ENCODE measurements at regions of chr1 and their contacts with region 1.

Region 1: DNA sequence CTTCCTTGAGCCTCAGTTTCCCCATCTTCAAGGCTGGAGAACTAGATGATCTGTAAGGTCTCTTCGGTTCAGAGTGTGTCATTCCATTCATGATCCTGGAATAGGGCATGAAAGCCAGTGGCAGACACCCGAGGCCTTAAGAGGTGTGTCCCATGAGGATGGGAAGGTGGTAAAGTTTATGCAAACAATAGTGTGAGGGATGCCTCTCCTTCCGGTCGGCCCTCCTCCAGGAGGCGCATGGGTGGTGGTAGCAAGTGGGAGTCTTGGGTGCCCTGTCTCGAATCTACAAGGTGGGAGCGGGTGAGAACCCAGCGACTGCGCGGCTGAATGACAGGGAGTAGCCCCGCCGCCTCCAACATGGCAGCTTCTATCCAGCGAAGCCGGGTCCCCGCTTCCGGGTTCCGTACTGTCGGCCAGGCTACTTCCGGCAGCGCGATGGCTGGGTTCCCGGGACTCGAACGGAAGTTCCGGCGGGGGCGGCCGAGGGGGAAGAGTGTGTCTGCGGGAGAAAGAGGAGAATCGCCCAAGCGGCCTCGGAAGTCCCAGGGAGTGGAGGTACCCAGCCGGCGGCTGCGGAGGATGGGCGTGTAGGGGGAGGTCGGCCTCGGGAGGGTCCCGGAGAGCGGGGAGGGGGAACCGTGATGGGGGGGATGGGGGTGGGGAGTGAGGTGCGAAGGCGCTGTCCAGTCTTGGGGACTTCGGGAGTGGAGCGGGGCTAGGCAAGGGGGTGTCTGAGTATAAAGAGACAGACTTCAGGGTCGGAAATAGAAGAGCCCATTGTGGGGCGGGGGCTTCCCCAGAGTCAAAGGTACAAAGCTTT is at the start of gene LYPLA2:
- DNase-seq: peak; percentile 90
- H3K4me3 ChIP-seq: peak within 1 kb of the TSS; percentile 95
- H3K27ac ChIP-seq: peak within 1 kb of the TSS; percentile 43
- H3K4me1 ChIP-seq: peaks cover 14% of the 10 kb centered on the region
- CTCF ChIP-seq: 0 out of 2 replicates have a peak, but pooled peaks have one; percentile 19
- total RNA-seq, gene LYPLA2: 65.1 and 91.2 TPM in 2 replicates

Region 2: GRCh38 chr1:23394684-23395083 is 396.2 kb before region 1 on chr1:
- CTCF ChIA-PET with region 1: no interaction called
- POLR2A ChIA-PET with region 1: no interaction called
- intact Hi-C with region 1: no loop called
- DNase-seq: no peak
- H3K4me3 ChIP-seq: no peak overlapping the region
- H3K27ac ChIP-seq: no peak overlapping the region
- H3K4me1 ChIP-seq: no peaks in the 10 kb centered on the region
- CTCF ChIP-seq: no peak

Region 3: DNA sequence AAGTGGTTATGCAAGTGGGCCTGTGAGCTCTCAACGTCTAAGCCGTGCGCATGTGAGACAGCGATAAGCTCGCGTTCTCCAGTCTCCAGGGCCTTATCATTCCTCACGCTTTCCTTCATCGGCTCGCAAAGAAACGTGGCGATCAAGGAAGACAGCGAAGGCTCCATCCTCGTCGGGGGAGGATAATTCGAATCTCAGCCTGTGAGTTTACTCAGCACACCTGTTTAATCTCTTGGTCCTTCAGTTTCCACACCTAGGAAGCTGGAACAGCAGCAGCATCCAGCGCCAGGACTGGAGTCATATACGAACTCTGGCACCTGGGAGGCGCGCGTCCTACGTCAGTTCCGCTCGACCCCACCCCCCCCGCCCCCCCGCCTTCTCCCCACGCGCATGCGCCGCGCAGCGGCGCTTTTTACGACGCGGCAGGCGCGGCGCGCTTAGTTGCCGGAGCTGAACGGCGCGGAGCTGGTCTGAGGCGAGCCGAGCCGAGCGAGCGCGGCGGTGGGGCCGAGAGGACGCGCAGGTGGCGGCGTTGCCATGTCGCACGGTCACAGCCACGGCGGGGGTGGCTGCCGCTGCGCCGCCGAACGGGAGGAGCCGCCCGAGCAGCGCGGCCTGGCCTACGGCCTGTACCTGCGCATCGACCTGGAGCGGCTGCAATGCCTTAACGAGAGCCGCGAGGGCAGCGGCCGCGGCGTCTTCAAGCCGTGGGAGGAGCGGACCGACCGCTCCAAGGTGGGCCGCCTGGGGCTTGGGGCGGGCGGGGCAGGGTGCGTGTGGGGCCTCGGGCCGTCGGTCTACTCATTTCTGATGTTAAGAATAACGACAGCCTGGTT is 12.7 kb before region 1 on chr1 and contains the start of gene PITHD1:
- CTCF ChIA-PET with region 1: interaction called, 4 read pairs
- POLR2A ChIA-PET with region 1: interaction called, 4 read pairs
- intact Hi-C with region 1: loop called (anchors 1 kb)
- DNase-seq: peak; percentile 93
- H3K4me3 ChIP-seq: peak within 1 kb of the TSS; percentile 88
- H3K27ac ChIP-seq: peak within 1 kb of the TSS; percentile 47
- H3K4me1 ChIP-seq: peaks cover 29% of the 10 kb centered on the region
- CTCF ChIP-seq: no peak
- total RNA-seq, gene PITHD1: 89.9 and 90.8 TPM in 2 replicates